SK-N-SH (cell line): ENCODE measurements at regions of chr11 and their contacts with region 1.

Region 1: DNA sequence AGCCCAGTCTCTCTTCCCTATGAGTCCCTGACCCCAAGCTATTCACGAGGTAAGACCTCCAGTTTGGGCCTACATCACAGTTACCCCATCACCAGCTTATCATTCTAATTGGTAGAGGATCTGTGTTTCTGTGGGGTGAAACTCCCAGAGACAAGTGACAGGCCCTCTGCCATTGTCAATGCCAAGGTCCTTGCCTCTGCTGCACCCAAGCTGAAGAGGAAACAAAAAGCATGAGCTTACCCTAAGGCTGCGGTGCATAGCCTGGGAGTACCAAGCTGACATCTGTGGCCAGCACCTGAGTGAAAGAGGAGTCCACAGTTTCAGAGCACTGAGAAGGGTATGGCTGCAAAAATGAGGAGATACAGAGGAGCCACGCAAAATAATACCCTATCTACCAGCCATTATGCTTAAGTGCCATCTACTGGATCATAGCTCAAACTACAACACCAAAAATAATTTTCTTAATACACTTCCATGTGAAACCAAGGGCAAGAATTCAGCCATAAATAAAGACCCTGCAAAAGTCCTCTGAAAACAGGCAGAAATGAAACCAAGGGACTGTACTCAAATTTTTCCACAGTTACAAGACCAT is 62.3 kb upstream of the ANO5 start:
- DNase-seq: peak; percentile 23
- H3K4me3 ChIP-seq: no peak overlapping the region; a peak in 1 of 4 replicates
- H3K27ac ChIP-seq: peak overlapping the region in 1 of 2 experiments; percentile 67; a peak in 2 of 4 replicates
- H3K4me1 ChIP-seq: peaks cover 0 to 6% of the 10 kb centered on the region in 2 experiments; a peak in 1 of 4 replicates
- H3K27me3 ChIP-seq: no peaks in the 10 kb centered on the region
- CTCF ChIP-seq: peak; percentile 46
- EP300 ChIP-seq: no peak
- RAD21 ChIP-seq: peak; percentile 86

Region 2: GRCh38 chr11:22115470-22116029 is 15.0 kb before region 1 on chr11:
- CTCF ChIA-PET with region 1: interaction called, 12 read pairs
- POLR2A ChIA-PET with region 1: no interaction called
- DNase-seq: no peak
- H3K4me3 ChIP-seq: no peak overlapping the region
- H3K27ac ChIP-seq: no peak overlapping the region
- H3K4me1 ChIP-seq: no peaks in the 10 kb centered on the region
- H3K27me3 ChIP-seq: no peaks in the 10 kb centered on the region
- CTCF ChIP-seq: no peak
- EP300 ChIP-seq: no peak
- RAD21 ChIP-seq: no peak

Region 3: GRCh38 chr11:22151649-22152197 is 21.2 kb after region 1 on chr11:
- CTCF ChIA-PET with region 1: interaction called, 31 read pairs
- POLR2A ChIA-PET with region 1: no interaction called
- DNase-seq: peak; percentile 53
- H3K4me3 ChIP-seq: no peak overlapping the region
- H3K27ac ChIP-seq: peak overlapping the region in 1 of 2 experiments; percentile 56; a peak in 2 of 4 replicates
- H3K4me1 ChIP-seq: peaks cover 0 to 7% of the 10 kb centered on the region in 2 experiments; a peak in 2 of 4 replicates
- H3K27me3 ChIP-seq: no peaks in the 10 kb centered on the region
- CTCF ChIP-seq: no peak
- EP300 ChIP-seq: peak in 1 of 2 experiments; percentile 69; a peak in 2 of 4 replicates
- RAD21 ChIP-seq: no peak